IMR-90 (cell line): ENCODE measurements at regions of chr10 and their contacts with region 1.

Region 1: DNA sequence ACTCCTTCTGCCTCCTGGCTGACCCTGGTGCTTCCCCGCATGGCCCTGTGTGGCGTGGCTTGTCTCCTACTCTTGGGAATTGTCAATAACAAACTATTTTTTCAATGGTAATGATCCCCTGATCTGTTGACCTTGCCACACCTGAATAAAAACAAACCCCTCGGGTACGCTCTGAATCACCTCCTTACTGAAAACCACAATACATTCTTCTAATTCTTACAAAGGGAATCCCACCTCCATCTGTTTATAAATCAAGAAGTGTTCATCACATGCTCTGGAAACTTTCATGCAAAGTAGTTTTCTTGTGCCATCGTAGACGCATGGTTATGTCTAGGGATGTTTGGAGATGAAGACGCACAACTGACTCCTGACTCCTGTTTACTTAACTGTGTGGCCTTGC is 245.8 kb downstream of the FRMD4A start:
- DNase-seq: peak; percentile 52
- ATAC-seq: peak; percentile 24
- H3K4me3 ChIP-seq: no peak overlapping the region
- H3K27ac ChIP-seq: no peak overlapping the region
- H3K4me1 ChIP-seq: peaks cover 16% of the 10 kb centered on the region
- H3K27me3 ChIP-seq: peaks cover 3% of the 10 kb centered on the region; the same call in 1 of the 2 replicates
- CTCF ChIP-seq: no peak
- POLR2A ChIP-seq: no peak
- RAD21 ChIP-seq: no peak

Region 2: GRCh38 chr10:13803611-13804554 is 281.0 kb before region 1 on chr10:
- CTCF ChIA-PET with region 1: no interaction called
- POLR2A ChIA-PET with region 1: no interaction called
- dilution Hi-C with region 1: no loop called
- in situ Hi-C with region 1: no loop called
- intact Hi-C with region 1: loop called (anchors 5 kb)
- DNase-seq: peak; percentile 41
- ATAC-seq: peak; percentile 62
- H3K4me3 ChIP-seq: no peak overlapping the region
- H3K27ac ChIP-seq: no peak overlapping the region
- H3K4me1 ChIP-seq: peaks cover 13% of the 10 kb centered on the region
- H3K27me3 ChIP-seq: no peaks in the 10 kb centered on the region
- CTCF ChIP-seq: no peak
- POLR2A ChIP-seq: no peak
- RAD21 ChIP-seq: no peak

Region 3: DNA sequence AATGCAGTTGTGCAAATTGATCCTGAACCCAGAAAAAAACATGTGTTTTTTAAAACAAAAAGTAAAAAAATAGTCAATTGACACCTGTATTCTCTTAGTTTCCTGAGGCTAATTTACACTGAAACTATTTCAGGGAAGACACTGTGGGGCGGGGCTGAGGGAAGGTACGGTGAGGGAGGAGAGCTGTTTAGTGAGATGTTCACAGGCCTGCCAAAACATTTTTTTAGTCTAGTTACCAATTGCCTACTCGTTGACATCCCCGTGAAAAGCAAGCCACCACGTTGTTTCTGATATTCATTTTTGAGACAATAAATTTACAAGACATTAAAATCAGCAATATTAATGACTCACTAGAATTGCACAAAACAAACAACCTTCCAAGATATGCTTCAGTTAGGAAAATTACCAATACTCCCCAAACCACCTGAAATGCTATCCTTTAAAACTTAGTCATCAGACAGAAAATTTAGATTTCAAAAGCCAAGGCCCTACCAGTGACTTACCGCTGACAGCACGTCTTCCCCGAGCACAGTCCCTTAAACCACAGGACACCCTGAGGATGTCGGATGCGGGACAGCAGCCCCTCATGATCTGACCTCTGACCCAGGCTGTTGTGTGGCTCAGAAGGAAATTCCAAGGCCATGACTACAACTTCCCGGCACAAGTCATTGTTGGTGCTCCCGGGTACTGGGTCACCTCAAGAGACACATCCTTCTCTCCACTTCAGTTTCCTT is 218.9 kb before region 1 on chr10:
- CTCF ChIA-PET with region 1: no interaction called
- POLR2A ChIA-PET with region 1: no interaction called
- dilution Hi-C with region 1: no loop called
- in situ Hi-C with region 1: no loop called
- intact Hi-C with region 1: no loop called
- DNase-seq: peak; percentile 80
- ATAC-seq: peak; percentile 85
- H3K4me3 ChIP-seq: no peak overlapping the region
- H3K27ac ChIP-seq: peak overlapping the region; percentile 21
- H3K4me1 ChIP-seq: peaks cover 8% of the 10 kb centered on the region
- H3K27me3 ChIP-seq: no peaks in the 10 kb centered on the region
- CTCF ChIP-seq: no peak
- POLR2A ChIP-seq: no peak
- RAD21 ChIP-seq: no peak